OCI-LY7 (cell line): ENCODE measurements at regions of chr3 and their contacts with region 1.

Region 1: GRCh38 chr3:150408221-150409102 is at the start of gene TSC22D2:
- DNase-seq: peak; percentile 93
- H3K4me3 ChIP-seq: peak within 1 kb of the TSS; percentile 78
- H3K27ac ChIP-seq: peak within 1 kb of the TSS; percentile 95
- H3K4me1 ChIP-seq: peaks cover 11% of the 10 kb centered on the region
- CTCF ChIP-seq: no peak
- total RNA-seq, gene TSC22D2: 5.9 and 6.2 TPM in 2 replicates

Region 2: DNA sequence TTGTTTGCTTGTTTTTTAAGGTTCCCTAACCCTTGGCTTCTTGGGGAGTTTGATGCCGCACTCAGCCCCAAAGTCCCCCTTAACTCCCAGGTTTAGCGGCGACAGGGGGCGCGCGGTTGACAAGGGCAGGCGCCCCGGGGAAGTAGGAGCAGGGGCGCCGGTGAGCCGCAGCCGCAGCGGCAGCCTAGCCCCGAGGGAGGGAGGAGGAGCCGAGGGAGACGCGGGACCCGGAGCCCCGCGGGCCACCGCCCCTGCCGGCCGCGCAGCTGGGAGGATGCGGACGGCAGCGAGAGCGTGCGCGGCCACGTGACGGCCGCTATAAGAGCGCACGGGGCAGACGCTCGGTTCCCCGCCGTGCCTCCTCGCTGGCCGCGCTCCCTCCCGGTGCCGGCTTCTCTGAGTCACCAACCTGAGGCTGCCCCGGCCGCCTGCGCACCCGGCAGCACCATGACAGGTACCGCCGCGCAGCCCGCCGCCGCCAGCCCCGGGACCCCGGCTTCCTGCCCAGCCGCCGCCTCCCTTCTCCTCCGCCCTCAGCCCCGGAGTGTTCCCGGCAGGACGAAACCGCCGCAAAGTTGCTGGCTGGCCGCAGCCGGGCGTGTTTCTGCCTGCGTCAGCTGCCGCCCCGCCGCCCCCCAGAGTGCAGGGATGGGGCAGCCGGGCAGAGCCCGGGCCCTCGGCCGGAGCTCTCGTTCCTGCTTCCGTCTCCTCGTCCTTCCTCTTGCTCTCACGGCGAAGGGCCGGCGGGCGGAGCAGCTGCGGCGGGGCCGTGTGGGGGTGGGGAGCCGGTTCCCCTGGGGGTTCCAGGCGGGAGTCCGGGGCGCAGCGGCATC is 1417.1 kb before region 1 on chr3 and contains the start of gene GYG1:
- CTCF ChIA-PET with region 1: no interaction called
- POLR2A ChIA-PET with region 1: no interaction called
- intact Hi-C with region 1: loop called (anchors 5 kb)
- DNase-seq: peak; percentile 88
- H3K4me3 ChIP-seq: peak within 1 kb of the TSS; percentile 81
- H3K27ac ChIP-seq: peak within 1 kb of the TSS; percentile 50
- H3K4me1 ChIP-seq: peaks cover 20% of the 10 kb centered on the region
- CTCF ChIP-seq: peak; percentile 80
- total RNA-seq, gene GYG1: 9.6 and 11.5 TPM in 2 replicates

Region 3: DNA sequence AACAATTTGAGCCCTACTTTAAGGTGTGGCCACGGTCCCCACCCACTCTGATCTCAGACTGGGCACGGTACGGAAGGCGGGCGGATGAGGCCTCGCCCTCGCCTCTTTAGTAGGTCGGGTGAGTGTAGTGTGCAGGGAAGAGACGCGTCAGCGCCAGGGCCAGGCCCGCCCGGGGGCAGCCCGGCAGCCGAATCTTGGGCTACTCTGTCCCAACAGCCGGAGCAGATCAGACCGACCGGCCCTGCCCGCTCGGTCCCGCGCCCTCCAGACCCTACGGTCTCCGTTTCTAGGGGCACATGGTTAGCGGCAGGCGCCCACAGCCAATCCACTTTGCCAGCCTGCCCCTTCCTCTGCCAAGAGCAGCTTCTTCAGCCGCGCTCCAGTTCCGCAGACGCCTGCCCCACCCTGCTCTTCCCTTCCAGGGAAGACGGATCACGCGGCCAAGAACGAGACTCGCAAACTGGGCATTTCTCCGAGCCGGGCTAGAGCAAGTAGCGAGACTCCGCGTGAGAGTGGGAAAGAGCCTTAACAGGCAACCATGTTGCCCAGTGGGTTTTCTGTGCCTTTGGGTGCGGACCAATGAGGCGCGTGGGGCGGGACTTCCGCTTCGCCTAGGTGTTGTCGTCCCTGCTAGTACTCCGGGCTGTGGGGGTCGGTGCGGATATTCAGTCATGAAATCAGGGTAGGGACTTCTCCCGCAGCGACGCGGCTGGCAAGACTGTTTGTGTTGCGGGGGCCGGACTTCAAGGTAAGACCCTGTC is 595.7 kb before region 1 on chr3 and contains the start of gene RNF13:
- CTCF ChIA-PET with region 1: no interaction called
- POLR2A ChIA-PET with region 1: no interaction called
- intact Hi-C with region 1: loop called (anchors 2 kb)
- DNase-seq: peak; percentile 94
- H3K4me3 ChIP-seq: peak within 1 kb of the TSS; percentile 87
- H3K27ac ChIP-seq: peak within 1 kb of the TSS; percentile 77
- H3K4me1 ChIP-seq: peaks cover 43% of the 10 kb centered on the region
- CTCF ChIP-seq: no peak
- total RNA-seq, gene RNF13: 16.1 and 26.2 TPM in 2 replicates

Region 4: GRCh38 chr3:150396956-150397550 is 11.4 kb before region 1 on chr3:
- CTCF ChIA-PET with region 1: no interaction called
- POLR2A ChIA-PET with region 1: interaction called, 12 read pairs
- intact Hi-C with region 1: no loop called
- DNase-seq: no peak
- H3K4me3 ChIP-seq: no peak overlapping the region
- H3K27ac ChIP-seq: no peak overlapping the region
- H3K4me1 ChIP-seq: no peaks in the 10 kb centered on the region
- CTCF ChIP-seq: no peak

Region 5: GRCh38 chr3:150546226-150547044 is 138.0 kb after region 1 on chr3 and contains the starts of genes EIF2A and SERP1:
- CTCF ChIA-PET with region 1: no interaction called
- POLR2A ChIA-PET with region 1: interaction called, 15 read pairs
- intact Hi-C with region 1: loop called (anchors 1 kb)
- DNase-seq: peak; percentile 99
- H3K4me3 ChIP-seq: peak within 1 kb of the TSS; percentile 98
- H3K27ac ChIP-seq: peak within 1 kb of the TSS; percentile 81
- H3K4me1 ChIP-seq: peaks cover 40% of the 10 kb centered on the region
- CTCF ChIP-seq: no peak
- total RNA-seq, gene EIF2A: 85.6 and 86.0 TPM in 2 replicates
- total RNA-seq, gene SERP1: 182 and 183 TPM in 2 replicates

Region 6: GRCh38 chr3:151086484-151087456 is 678.3 kb after region 1 on chr3:
- CTCF ChIA-PET with region 1: no interaction called
- POLR2A ChIA-PET with region 1: interaction called, 5 read pairs
- intact Hi-C with region 1: loop called (anchors 1 kb)
- DNase-seq: peak; percentile 92
- H3K4me3 ChIP-seq: peak overlapping the region; percentile 88
- H3K27ac ChIP-seq: peak overlapping the region; percentile 71
- H3K4me1 ChIP-seq: peaks cover 25% of the 10 kb centered on the region
- CTCF ChIP-seq: peak; percentile 60